GM12878 (cell line): ENCODE measurements at regions of chr10 and their contacts with region 1.

Region 1: DNA sequence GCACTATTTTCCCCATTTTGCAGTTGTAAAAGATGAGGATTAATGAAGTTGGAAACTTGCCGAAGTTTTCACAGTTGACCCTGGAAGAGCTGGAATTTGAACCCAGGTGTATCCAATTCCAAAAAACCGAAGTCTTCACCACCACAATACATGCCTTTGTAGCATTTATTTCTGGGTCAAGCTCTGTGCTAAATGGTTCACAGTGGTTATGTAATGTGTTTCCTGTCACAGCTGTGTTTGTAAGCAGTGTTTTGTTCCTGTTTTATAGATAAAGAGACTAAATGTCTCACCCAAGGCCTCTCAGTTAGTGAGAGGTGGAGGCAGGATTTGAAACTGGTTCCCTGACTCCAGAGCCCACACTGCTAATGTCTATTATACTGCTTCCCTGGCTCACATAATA is 17.6 kb downstream of the SFTPA2 start:
- DNase-seq: no peak
- ATAC-seq: no peak
- H3K4me3 ChIP-seq: no peak overlapping the region
- H3K27ac ChIP-seq: no peak overlapping the region
- H3K4me1 ChIP-seq: no peaks in the 10 kb centered on the region
- H3K27me3 ChIP-seq: no peaks in the 10 kb centered on the region; a peak in 1 of 4 replicates
- CTCF ChIP-seq: no peak
- EP300 ChIP-seq: no peak
- POLR2A ChIP-seq: no peak
- RAD21 ChIP-seq: no peak

Region 2: DNA sequence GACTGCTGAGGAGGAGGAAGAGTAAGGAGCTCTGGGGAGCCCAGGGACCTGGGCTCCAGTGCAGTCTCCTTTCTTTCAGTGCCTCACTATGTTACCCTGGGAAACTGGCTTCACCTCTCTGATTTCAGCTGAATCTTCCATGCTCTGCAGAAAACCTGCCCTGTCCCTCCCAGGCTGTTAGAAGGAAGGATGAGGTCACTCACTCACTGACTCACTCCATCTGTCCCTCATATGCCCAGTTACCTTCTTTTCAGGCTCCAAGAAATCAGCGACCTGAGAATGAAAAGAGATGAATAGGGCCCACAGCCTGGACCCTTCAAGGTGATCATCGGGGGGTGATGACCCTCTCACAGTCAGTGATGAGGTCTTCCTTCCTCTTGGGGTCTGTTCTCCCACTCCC is 17.1 kb after region 1 on chr10:
- CTCF ChIA-PET with region 1: no interaction called
- POLR2A ChIA-PET with region 1: no interaction called
- RAD21 ChIA-PET with region 1: no interaction called
- SMC1A ChIA-PET with region 1: no interaction called
- in situ Hi-C with region 1: no loop called
- intact Hi-C with region 1: no loop called
- DNase-seq: no peak
- ATAC-seq: no peak
- H3K4me3 ChIP-seq: no peak overlapping the region
- H3K27ac ChIP-seq: no peak overlapping the region
- H3K4me1 ChIP-seq: no peaks in the 10 kb centered on the region
- H3K27me3 ChIP-seq: peaks cover 0 to 9% of the 10 kb centered on the region in 2 experiments
- CTCF ChIP-seq: no peak
- EP300 ChIP-seq: no peak
- POLR2A ChIP-seq: no peak
- RAD21 ChIP-seq: no peak

Region 3: GRCh38 chr10:79608505-79609375 is 66.1 kb after region 1 on chr10:
- CTCF ChIA-PET with region 1: interaction called, 3 read pairs
- POLR2A ChIA-PET with region 1: no interaction called
- RAD21 ChIA-PET with region 1: no interaction called
- SMC1A ChIA-PET with region 1: no interaction called
- in situ Hi-C with region 1: no loop called
- intact Hi-C with region 1: loop called (anchors 1 kb)
- DNase-seq: no peak
- ATAC-seq: peak; percentile 81
- H3K4me3 ChIP-seq: no peak overlapping the region
- H3K27ac ChIP-seq: no peak overlapping the region
- H3K4me1 ChIP-seq: no peaks in the 10 kb centered on the region
- H3K27me3 ChIP-seq: no peaks in the 10 kb centered on the region
- CTCF ChIP-seq: peak; percentile 59 to 71 (median 61)
- EP300 ChIP-seq: no peak
- POLR2A ChIP-seq: no peak
- RAD21 ChIP-seq: peak; percentile 61

Region 4: GRCh38 chr10:79929409-79929904 is 386.8 kb after region 1 on chr10:
- CTCF ChIA-PET with region 1: interaction called, 3 read pairs
- POLR2A ChIA-PET with region 1: no interaction called
- RAD21 ChIA-PET with region 1: no interaction called
- SMC1A ChIA-PET with region 1: interaction called, 3 read pairs
- in situ Hi-C with region 1: no loop called
- intact Hi-C with region 1: loop called (anchors 2 kb)
- DNase-seq: no peak
- ATAC-seq: peak; percentile 99
- H3K4me3 ChIP-seq: no peak overlapping the region
- H3K27ac ChIP-seq: no peak overlapping the region
- H3K4me1 ChIP-seq: no peaks in the 10 kb centered on the region
- H3K27me3 ChIP-seq: no peaks in the 10 kb centered on the region; a peak in 2 of 4 replicates
- CTCF ChIP-seq: peak; percentile 89 to 90 (median 89)
- EP300 ChIP-seq: no peak
- POLR2A ChIP-seq: no peak
- RAD21 ChIP-seq: peak; percentile 98

Region 5: DNA sequence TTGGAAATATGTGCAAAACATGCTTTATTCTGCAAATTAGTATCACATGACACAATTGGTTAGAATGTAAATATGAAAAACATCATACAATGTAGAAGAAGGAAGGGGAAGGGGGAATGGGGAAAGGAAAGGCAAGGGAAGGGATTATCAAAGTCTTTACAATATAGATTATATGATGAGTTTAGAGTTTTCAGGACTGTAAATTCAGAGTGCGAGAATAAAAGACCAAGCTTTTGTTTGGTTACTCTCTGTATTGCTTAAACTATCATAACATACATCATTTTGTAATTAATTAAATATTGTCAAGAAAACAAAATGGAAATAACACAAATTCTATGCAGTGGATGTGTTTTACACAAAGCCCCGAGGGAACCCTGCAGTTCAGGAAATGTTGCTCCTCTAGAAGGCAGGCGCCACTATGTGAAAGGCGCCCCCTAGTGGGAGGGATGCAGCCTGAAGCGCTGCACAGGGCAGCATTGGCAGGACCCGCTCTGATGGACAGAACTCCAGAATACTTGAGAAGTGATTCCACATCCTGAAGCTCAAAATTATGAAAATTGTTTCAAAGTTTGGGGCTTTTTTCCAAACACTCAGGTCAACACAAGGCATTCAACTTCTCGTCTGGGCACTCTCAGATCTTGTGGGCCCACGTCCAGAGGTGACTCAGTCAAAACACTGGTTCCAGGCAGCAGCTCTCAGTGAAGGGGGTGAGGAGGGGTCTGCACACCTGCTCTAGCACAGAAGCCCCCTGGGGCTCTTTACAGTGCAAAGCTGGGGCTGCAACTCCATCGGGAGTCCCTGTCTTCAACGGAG is 504.2 kb after region 1 on chr10:
- CTCF ChIA-PET with region 1: interaction called, 7 read pairs
- POLR2A ChIA-PET with region 1: no interaction called
- RAD21 ChIA-PET with region 1: interaction called, 6 read pairs
- SMC1A ChIA-PET with region 1: interaction called, 3 read pairs
- in situ Hi-C with region 1: loop called (anchors 10 kb)
- intact Hi-C with region 1: loop called (anchors 5 kb)
- DNase-seq: no peak
- ATAC-seq: peak; percentile 97
- H3K4me3 ChIP-seq: no peak overlapping the region
- H3K27ac ChIP-seq: no peak overlapping the region
- H3K4me1 ChIP-seq: no peaks in the 10 kb centered on the region
- H3K27me3 ChIP-seq: no peaks in the 10 kb centered on the region; a peak in 1 of 4 replicates
- CTCF ChIP-seq: peak; percentile 83 to 94 (median 93)
- EP300 ChIP-seq: no peak
- POLR2A ChIP-seq: no peak
- RAD21 ChIP-seq: peak; percentile 69

Region 6: GRCh38 chr10:80253266-80254245 is 710.9 kb after region 1 on chr10:
- CTCF ChIA-PET with region 1: no interaction called
- POLR2A ChIA-PET with region 1: no interaction called
- RAD21 ChIA-PET with region 1: no interaction called
- SMC1A ChIA-PET with region 1: no interaction called
- in situ Hi-C with region 1: loop called (anchors 25 kb)
- intact Hi-C with region 1: no loop called
- DNase-seq: peak; percentile 11
- ATAC-seq: no peak; the same call in 2 of the 3 replicates
- H3K4me3 ChIP-seq: no peak overlapping the region
- H3K27ac ChIP-seq: no peak overlapping the region
- H3K4me1 ChIP-seq: peaks cover 8% of the 10 kb centered on the region
- H3K27me3 ChIP-seq: no peaks in the 10 kb centered on the region; a peak in 1 of 4 replicates
- CTCF ChIP-seq: no peak
- EP300 ChIP-seq: no peak
- POLR2A ChIP-seq: no peak
- RAD21 ChIP-seq: no peak